ENCODE measurements at regions of chr3 and their contacts with region 1.

Region 1: DNA sequence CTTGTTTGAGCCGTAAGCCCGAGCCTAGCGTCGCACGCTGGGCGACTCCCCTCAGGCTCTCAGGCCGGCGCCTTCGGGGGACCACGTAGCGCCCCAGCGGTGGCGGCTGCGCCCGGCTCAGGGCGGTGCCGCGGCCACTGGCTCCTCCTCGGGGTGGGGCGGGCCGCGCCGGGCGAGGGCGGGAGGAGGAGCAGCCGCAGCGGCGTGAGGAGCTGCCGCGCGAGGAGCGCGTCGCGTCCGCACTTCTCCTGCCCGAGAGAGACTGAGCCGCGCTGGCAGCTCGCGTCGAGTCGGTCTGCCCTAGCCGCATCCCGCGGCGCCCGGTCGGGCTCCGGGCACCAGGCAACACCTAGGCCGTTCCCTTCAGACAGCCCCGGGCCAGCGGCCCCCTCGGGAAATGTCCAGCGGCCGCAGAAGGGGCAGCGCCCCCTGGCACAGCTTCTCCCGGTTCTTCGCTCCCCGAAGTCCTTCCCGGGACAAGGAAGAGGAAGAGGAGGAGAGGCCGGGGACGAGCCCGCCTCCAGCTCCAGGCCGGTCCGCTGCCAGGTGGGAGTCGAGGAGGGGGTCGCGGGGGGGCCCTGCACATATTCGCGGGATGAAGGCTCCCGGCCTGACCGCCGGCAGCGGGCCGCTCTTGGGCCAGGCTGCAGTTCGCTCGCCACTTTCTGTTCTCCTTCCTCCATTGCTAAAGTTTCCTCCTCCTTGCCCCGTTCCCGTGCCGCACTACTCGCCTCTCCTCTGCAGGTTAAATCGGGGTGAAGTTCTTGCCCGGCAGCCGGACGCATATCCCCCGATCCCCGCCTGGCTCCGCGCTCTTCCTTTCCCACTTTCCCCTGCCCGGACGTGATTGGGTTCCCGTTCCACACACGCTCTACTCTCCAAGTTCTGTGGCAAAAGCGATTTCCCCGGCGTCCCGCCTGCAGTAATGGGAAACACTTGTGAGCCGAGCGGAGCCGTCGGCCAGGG is at the start of gene CRYBG3:
- DNase-seq: peak; percentile 54 to 90 (median 65)
- H3K4me3 ChIP-seq: peak within 1 kb of the TSS; percentile 58 to 97 (median 82)
- H3K27ac ChIP-seq: peak within 1 kb of the TSS; percentile 13 to 93 (median 82)
- H3K27me3 ChIP-seq: no peaks in the 10 kb centered on the region
- CTCF ChIP-seq: peak in 38 of 56 donors; percentile 2 to 67 (median 38)
- total RNA-seq, gene CRYBG3: 9.4 to 40.2 (median 17.5) TPM

Region 2: GRCh38 chr3:97764407-97765238 is 57.5 kb before region 1 on chr3 and contains the start of gene ARL6:
- intact Hi-C with region 1: loop called in 1 of 2 experiments (anchors 5 kb)
- DNase-seq: peak; percentile 77 to 92 (median 86)
- H3K4me3 ChIP-seq: peak within 1 kb of the TSS; percentile 58 to 99 (median 82)
- H3K27ac ChIP-seq: peak within 1 kb of the TSS in 58 of 59 donors; percentile 40 to 96 (median 85)
- H3K27me3 ChIP-seq: no peaks in the 10 kb centered on the region
- CTCF ChIP-seq: peak in 21 of 56 donors; percentile 5 to 53 (median 24)
- total RNA-seq, gene ARL6: 13.1 to 47.1 (median 29.5) TPM

Region 3: GRCh38 chr3:97971677-97972567 is 149.8 kb after region 1 on chr3 and contains the start of gene RIOX2:
- intact Hi-C with region 1: loop called (anchors 5 kb)
- DNase-seq: peak; percentile 56 to 83 (median 74)
- H3K4me3 ChIP-seq: peak within 1 kb of the TSS; percentile 62 to 85 (median 75)
- H3K27ac ChIP-seq: peak within 1 kb of the TSS in 56 of 59 donors; percentile 12 to 91 (median 78)
- H3K27me3 ChIP-seq: no peaks in the 10 kb centered on the region
- CTCF ChIP-seq: peak in 17 of 56 donors; percentile 2 to 35 (median 22)
- total RNA-seq, gene RIOX2: 17.8 to 37.3 (median 27.6) TPM

Measured in dorsolateral prefrontal cortex (tissue), 120 donors.